Sciatic nerve (tissue), 2 donors: ENCODE measurements at regions of chr14 and their contacts with region 1.

Region 1: GRCh38 chr14:90409209-90409730 is 12.4 kb downstream of the CALM1 start:
- DNase-seq: no peak
- ATAC-seq: peak; percentile 82

Region 2: GRCh38 chr14:90518941-90519256 is 109.6 kb after region 1 on chr14:
- intact Hi-C with region 1: loop called (anchors 5 kb)
- DNase-seq: no peak
- ATAC-seq: no peak

Region 3: GRCh38 chr14:90697577-90698206 is 288.4 kb after region 1 on chr14:
- intact Hi-C with region 1: loop called (anchors 5 kb)
- DNase-seq: peak; percentile 92
- ATAC-seq: peak; percentile 97